ENCODE measurements at regions of chr9 and their contacts with region 1.

Region 1: GRCh38 chr9:108142504-108143201 is 653.1 kb upstream of the KLF4 start:
- DNase-seq: peak; percentile 25 to 93
- H3K4me3 ChIP-seq: no peak overlapping the region
- H3K27ac ChIP-seq: peak overlapping the region; percentile 69 to 80
- H3K4me1 ChIP-seq: peaks cover 5 to 11% of the 10 kb centered on the region in 2 donors
- H3K27me3 ChIP-seq: no peaks in the 10 kb centered on the region
- CTCF ChIP-seq: no peak

Region 2: GRCh38 chr9:108444400-108445358 is 302.0 kb after region 1 on chr9:
- intact Hi-C with region 1: loop called (anchors 10 kb)
- DNase-seq: peak; percentile 10 to 75
- H3K4me3 ChIP-seq: peak overlapping the region in 1 of 2 donors; percentile 16
- H3K27ac ChIP-seq: peak overlapping the region; percentile 63 to 69
- H3K4me1 ChIP-seq: peaks cover 0 to 37% of the 10 kb centered on the region in 2 donors
- H3K27me3 ChIP-seq: no peaks in the 10 kb centered on the region
- CTCF ChIP-seq: no peak